A673 (cell line): ENCODE measurements at regions of chr19 and their contacts with region 1.

Region 1: DNA sequence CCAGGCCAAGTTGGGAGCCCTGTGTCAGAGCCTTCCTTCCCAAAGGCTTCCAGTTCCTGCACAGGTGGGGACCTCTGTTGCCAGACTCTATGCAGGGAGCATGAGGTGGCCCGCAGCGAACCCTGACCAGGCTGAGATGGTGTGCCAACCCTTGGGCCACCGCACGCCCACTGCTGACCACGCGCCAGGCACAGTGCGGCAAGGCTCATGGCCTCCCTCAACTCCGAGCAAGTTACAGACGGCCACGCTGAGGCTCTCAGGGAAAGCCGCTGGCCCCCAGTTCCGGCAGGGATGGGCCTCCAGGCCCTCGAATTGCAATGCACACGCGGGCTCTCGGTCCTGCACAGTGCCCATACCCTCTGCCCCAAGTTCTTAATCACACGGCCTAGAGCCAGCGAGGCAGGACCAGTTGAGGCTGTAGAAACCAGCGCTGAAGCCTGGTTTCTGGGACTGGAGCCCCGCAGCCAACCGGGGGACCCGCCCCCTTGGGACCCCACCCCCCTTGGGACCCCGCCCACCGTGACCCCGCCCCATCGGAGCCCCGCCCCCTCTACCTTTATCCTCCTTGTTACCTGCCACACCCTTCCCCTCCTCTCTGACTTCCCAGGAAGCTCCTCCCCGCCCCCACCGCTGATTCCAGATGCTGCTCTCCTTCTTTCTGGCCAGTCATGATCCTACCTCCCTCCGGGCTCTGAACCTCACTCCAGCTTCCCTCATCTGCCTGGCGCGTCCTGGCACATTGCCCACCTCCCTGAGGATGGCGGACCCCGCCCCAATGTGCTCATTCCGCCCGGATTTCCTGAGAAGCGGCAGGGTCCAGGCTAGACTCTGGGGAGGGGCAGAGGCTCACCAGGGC is 6.0 kb downstream of the PEX11G start:
- DNase-seq: peak; percentile 55
- H3K4me3 ChIP-seq: no peak overlapping the region
- H3K27ac ChIP-seq: no peak overlapping the region
- H3K4me1 ChIP-seq: no peaks in the 10 kb centered on the region
- H3K27me3 ChIP-seq: no peaks in the 10 kb centered on the region
- CTCF ChIP-seq: no peak

Region 2: DNA sequence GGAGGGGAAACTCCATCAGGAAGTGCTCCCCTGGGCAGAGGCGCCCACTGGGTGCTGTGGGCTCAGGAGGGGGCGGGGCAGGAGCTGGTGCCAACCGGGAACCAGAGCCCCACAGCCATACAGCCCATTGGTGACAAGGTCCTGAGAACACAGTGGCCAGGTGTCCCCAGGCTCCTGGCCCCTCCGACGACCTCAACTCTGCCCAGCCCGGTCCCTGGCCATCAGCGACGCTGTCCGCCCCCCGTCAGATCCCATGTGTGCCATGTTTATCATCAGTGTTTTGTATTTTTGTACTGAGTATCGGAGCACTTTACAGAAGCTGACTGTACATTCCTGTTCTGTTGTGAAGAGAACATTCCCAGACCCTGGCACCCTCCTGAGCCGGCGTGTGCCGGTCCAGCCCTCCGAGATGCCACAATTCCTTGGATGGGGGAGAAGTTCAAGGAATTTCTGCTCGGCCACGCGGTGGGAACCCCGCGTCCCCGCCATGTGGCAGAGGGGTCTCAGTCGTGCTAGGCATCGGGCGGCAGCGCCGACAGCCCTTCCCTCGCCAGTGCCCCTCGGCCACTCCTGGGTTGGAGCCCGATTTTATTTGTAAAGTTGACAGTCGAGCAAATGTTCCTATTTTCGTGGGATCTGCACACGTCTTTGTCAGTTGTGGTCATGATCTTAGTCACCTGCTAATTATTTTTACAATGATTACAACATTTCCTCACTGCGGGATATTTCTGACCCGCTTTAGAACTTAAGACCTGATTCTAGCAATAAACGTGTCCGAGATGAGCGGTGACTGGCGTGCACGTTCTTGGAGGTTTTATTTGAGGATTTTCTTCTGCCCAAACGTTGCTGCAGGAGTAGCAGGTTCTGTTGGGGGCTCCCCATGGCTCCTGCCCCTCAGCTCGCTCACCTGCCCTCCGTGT is 10.9 kb before region 1 on chr19:
- CTCF ChIA-PET with region 1: no interaction called
- POLR2A ChIA-PET with region 1: interaction called, 11 read pairs
- intact Hi-C with region 1: no loop called
- DNase-seq: no peak
- H3K4me3 ChIP-seq: no peak overlapping the region
- H3K27ac ChIP-seq: no peak overlapping the region
- H3K4me1 ChIP-seq: no peaks in the 10 kb centered on the region
- H3K27me3 ChIP-seq: no peaks in the 10 kb centered on the region
- CTCF ChIP-seq: no peak

Region 3: GRCh38 chr19:7618771-7619514 is 136.1 kb after region 1 on chr19:
- CTCF ChIA-PET with region 1: no interaction called
- POLR2A ChIA-PET with region 1: no interaction called
- intact Hi-C with region 1: no loop called
- DNase-seq: no peak
- H3K4me3 ChIP-seq: no peak overlapping the region
- H3K27ac ChIP-seq: no peak overlapping the region
- H3K4me1 ChIP-seq: no peaks in the 10 kb centered on the region
- H3K27me3 ChIP-seq: no peaks in the 10 kb centered on the region
- CTCF ChIP-seq: no peak